ENCODE measurements at regions of chr14 and their contacts with region 1.

Region 1: GRCh38 chr14:106185837-106186233 is 659.5 kb downstream of the TMEM121 start:
- DNase-seq: peak; percentile 70 to 77 (median 73)
- H3K4me3 ChIP-seq: no peak overlapping the region
- H3K4me3 Mint-ChIP-seq: peak overlapping the region in 7 of 8 donors; percentile 19 to 76 (median 58)
- H3K27ac ChIP-seq: peak overlapping the region; percentile 19
- H3K27ac Mint-ChIP-seq: peak overlapping the region; percentile 74 to 95 (median 90)
- H3K4me1 ChIP-seq: peaks cover 40% of the 10 kb centered on the region
- H3K4me1 Mint-ChIP-seq: peaks cover 28 to 54% (median 39%) of the 10 kb centered on the region in 4 donors
- H3K27me3 ChIP-seq: no peaks in the 10 kb centered on the region
- H3K27me3 Mint-ChIP-seq: no peaks in the 10 kb centered on the region

Region 2: GRCh38 chr14:104895786-104896661 is 1289.8 kb before region 1 on chr14:
- CTCF ChIA-PET with region 1: no interaction called
- POLR2A ChIA-PET with region 1: no interaction called
- intact Hi-C with region 1: no loop called
- DNase-seq: peak in 1 of 5 donors; percentile 41
- H3K4me3 ChIP-seq: no peak overlapping the region
- H3K4me3 Mint-ChIP-seq: no peak overlapping the region
- H3K27ac ChIP-seq: no peak overlapping the region
- H3K27ac Mint-ChIP-seq: no peak overlapping the region
- H3K4me1 ChIP-seq: no peaks in the 10 kb centered on the region
- H3K4me1 Mint-ChIP-seq: peaks cover 0 to 5% (median 2%) of the 10 kb centered on the region in 4 donors
- H3K27me3 ChIP-seq: no peaks in the 10 kb centered on the region
- H3K27me3 Mint-ChIP-seq: peaks cover 0 to 8% of the 10 kb centered on the region in 2 donors

Region 3: GRCh38 chr14:106062502-106063272 is 123.1 kb before region 1 on chr14:
- CTCF ChIA-PET with region 1: no interaction called
- POLR2A ChIA-PET with region 1: no interaction called
- intact Hi-C with region 1: loop called (anchors 2 kb)
- DNase-seq: no peak
- H3K4me3 ChIP-seq: no peak overlapping the region
- H3K4me3 Mint-ChIP-seq: peak overlapping the region in 1 of 8 donors; percentile 3
- H3K27ac ChIP-seq: no peak overlapping the region
- H3K27ac Mint-ChIP-seq: peak overlapping the region in 1 of 7 donors; percentile 40
- H3K4me1 ChIP-seq: peaks cover 11% of the 10 kb centered on the region
- H3K4me1 Mint-ChIP-seq: peaks cover 6 to 20% (median 15%) of the 10 kb centered on the region in 4 donors
- H3K27me3 ChIP-seq: no peaks in the 10 kb centered on the region
- H3K27me3 Mint-ChIP-seq: peaks cover 7 to 14% of the 10 kb centered on the region in 2 donors

Region 4: GRCh38 chr14:106120101-106120500 is 65.7 kb before region 1 on chr14:
- CTCF ChIA-PET with region 1: interaction called, 8 read pairs
- POLR2A ChIA-PET with region 1: interaction called, 3 read pairs
- intact Hi-C with region 1: loop called (anchors 5 kb)
- DNase-seq: no peak
- H3K4me3 ChIP-seq: no peak overlapping the region
- H3K4me3 Mint-ChIP-seq: peak overlapping the region in 6 of 8 donors; percentile 13 to 71 (median 60)
- H3K27ac ChIP-seq: no peak overlapping the region
- H3K27ac Mint-ChIP-seq: peak overlapping the region in 3 of 7 donors; percentile 22 to 64 (median 37)
- H3K4me1 ChIP-seq: peaks cover 21% of the 10 kb centered on the region
- H3K4me1 Mint-ChIP-seq: peaks cover 15 to 44% (median 24%) of the 10 kb centered on the region in 4 donors
- H3K27me3 ChIP-seq: no peaks in the 10 kb centered on the region
- H3K27me3 Mint-ChIP-seq: peaks cover 13 to 17% of the 10 kb centered on the region in 2 donors

Region 5: GRCh38 chr14:106174206-106174605 is 11.6 kb before region 1 on chr14:
- CTCF ChIA-PET with region 1: interaction called, 31 read pairs
- POLR2A ChIA-PET with region 1: interaction called, 8 read pairs
- intact Hi-C with region 1: loop called (anchors 1 kb)
- DNase-seq: peak; percentile 78 to 91 (median 84)
- H3K4me3 ChIP-seq: peak overlapping the region in 1 of 2 donors; percentile 18
- H3K4me3 Mint-ChIP-seq: peak overlapping the region; percentile 1 to 82 (median 78)
- H3K27ac ChIP-seq: peak overlapping the region; percentile 63
- H3K27ac Mint-ChIP-seq: peak overlapping the region; percentile 38 to 99 (median 97)
- H3K4me1 ChIP-seq: peaks cover 71% of the 10 kb centered on the region
- H3K4me1 Mint-ChIP-seq: peaks cover 54 to 84% (median 71%) of the 10 kb centered on the region in 4 donors
- H3K27me3 ChIP-seq: no peaks in the 10 kb centered on the region
- H3K27me3 Mint-ChIP-seq: no peaks in the 10 kb centered on the region

Region 6: DNA sequence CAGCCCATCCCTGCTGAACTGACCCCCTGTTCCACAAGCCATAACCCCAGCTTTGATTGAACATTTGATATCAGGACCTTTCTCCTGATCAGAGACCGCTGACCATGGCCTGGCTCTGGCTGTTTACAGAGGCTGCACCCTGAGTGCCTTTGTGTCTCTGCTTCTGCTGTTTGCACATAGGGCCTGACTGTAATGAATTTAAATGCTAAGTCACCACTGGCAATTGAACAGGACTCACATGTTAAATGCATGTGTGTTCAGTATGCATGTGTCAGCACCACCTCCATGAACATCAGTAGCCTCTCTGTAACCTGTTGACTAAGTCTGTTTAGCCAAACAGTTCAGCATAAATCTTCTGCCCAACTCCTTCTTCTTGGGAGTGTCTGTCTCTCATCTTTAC is 30.8 kb after region 1 on chr14:
- CTCF ChIA-PET with region 1: no interaction called
- POLR2A ChIA-PET with region 1: no interaction called
- intact Hi-C with region 1: no loop called
- DNase-seq: no peak
- H3K4me3 ChIP-seq: no peak overlapping the region
- H3K4me3 Mint-ChIP-seq: no peak overlapping the region
- H3K27ac ChIP-seq: no peak overlapping the region
- H3K27ac Mint-ChIP-seq: no peak overlapping the region
- H3K4me1 ChIP-seq: no peaks in the 10 kb centered on the region
- H3K4me1 Mint-ChIP-seq: peaks cover 1 to 9% (median 3%) of the 10 kb centered on the region in 4 donors
- H3K27me3 ChIP-seq: no peaks in the 10 kb centered on the region
- H3K27me3 Mint-ChIP-seq: peaks cover 0 to 6% of the 10 kb centered on the region in 2 donors